Psoas muscle (tissue), 8 donors: ENCODE measurements at regions of chr9 and their contacts with region 1.

Region 1: GRCh38 chr9:36258208-36258988 is at the start of gene GNE:
- DNase-seq: peak; percentile 99
- ATAC-seq: peak; percentile 98 to 99 (median 98)
- H3K4me3 ChIP-seq: peak within 1 kb of the TSS; percentile 87
- H3K27ac ChIP-seq: peak within 1 kb of the TSS; percentile 95
- H3K4me1 ChIP-seq: peaks cover 12% of the 10 kb centered on the region
- H3K27me3 ChIP-seq: no peaks in the 10 kb centered on the region
- CTCF ChIP-seq: no peak
- total RNA-seq, gene GNE: 8.5 to 11.6 (median 9.4) TPM

Region 2: DNA sequence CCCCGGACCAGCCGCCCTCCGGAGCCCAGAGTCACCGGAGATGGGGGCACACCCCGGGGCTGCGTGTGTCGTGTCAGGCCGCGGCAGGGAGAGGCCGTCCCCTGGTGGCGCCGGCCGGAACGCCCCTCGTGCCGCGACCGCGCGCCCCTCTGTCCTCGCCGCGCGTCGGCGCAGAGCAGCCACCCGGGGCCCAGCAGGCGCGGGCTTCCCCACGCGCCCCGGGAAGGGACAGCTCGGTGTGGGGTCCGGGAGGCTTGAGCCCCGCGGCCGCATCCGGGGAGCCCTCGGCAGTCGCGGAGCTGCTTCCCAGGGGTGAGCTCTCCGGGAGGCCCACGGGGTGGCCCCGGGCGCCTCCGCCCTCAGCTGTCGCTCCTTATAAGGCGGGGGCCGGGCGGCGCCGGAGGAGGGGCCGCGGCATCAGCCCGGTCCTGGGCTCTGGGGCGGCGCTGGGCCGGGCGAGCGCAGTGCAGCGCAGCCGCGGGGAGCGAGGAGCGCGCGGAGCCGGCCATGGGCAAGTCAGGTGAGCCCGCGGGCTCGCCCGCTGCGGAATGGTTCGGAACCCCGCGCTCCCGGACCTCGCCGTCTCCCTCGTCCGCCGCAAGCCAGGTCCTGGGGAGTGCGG is 122.0 kb before region 1 on chr9 and contains the start of gene GLIPR2:
- intact Hi-C with region 1: loop called in 1 of 2 experiments (anchors 5 kb)
- DNase-seq: peak; percentile 84 to 86
- ATAC-seq: peak; percentile 94 to 97 (median 96)
- H3K4me3 ChIP-seq: peak within 1 kb of the TSS; percentile 84
- H3K27ac ChIP-seq: peak within 1 kb of the TSS; percentile 50
- H3K4me1 ChIP-seq: peaks cover 8% of the 10 kb centered on the region
- H3K27me3 ChIP-seq: peaks cover 0 to 34% (median 0%) of the 10 kb centered on the region in 3 donors
- CTCF ChIP-seq: no peak
- total RNA-seq, gene GLIPR2: 3.6 to 6.5 (median 4.9) TPM

Region 3: DNA sequence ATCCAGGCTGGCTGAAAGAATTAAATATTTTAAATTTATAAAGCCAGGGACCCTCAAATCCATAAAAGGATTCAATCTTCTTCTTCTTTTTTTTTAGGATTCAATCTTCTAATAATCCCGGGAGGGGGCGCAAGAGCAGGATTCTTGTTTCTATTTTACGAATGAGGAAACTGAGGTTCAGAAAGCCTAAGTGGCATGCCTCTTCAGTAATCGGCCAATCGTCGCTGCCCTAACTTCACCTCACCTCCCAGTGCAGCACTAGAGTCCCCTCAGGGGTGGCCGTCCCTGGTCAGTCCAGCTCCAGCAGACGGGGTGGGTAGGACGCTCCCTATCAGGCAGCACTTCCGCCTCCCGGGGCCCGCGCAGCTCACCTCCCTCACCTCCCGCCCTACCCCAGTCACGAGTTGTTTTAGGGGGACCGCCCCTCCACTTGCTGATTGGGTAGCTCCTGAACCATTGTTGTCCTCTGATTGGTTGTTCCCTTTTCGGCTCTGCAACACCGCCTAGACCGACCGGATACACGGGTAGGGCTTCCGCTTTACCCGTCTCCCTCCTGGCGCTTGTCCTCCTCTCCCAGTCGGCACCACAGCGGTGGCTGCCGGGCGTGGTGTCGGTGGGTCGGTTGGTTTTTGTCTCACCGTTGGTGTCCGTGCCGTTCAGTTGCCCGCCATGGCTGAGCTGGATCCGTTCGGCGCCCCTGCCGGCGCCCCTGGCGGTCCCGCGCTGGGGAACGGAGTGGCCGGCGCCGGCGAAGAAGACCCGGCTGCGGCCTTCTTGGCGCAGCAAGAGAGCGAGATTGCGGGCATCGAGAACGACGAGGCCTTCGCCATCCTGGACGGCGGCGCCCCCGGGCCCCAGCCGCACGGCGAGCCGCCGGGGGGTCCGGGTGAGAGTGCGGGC is 67.8 kb before region 1 on chr9 and contains the start of gene CLTA:
- intact Hi-C with region 1: loop called in 1 of 2 experiments (anchors 5 kb)
- DNase-seq: peak; percentile 96 to 97
- ATAC-seq: peak; percentile 97 to 99 (median 99)
- H3K4me3 ChIP-seq: peak within 1 kb of the TSS; percentile 95
- H3K27ac ChIP-seq: peak within 1 kb of the TSS; percentile 97
- H3K4me1 ChIP-seq: peaks cover 41% of the 10 kb centered on the region
- H3K27me3 ChIP-seq: no peaks in the 10 kb centered on the region
- CTCF ChIP-seq: peak; percentile 47
- total RNA-seq, gene CLTA: 52.1 to 58.3 (median 54.6) TPM

Region 4: GRCh38 chr9:36245906-36246305 is 12.5 kb before region 1 on chr9:
- intact Hi-C with region 1: no loop called
- DNase-seq: no peak
- ATAC-seq: no peak
- H3K4me3 ChIP-seq: no peak overlapping the region
- H3K27ac ChIP-seq: no peak overlapping the region
- H3K4me1 ChIP-seq: peaks cover 3% of the 10 kb centered on the region
- H3K27me3 ChIP-seq: no peaks in the 10 kb centered on the region
- CTCF ChIP-seq: no peak